GM10248 (cell line): ENCODE measurements at regions of chr9 and their contacts with region 1.

Region 1: DNA sequence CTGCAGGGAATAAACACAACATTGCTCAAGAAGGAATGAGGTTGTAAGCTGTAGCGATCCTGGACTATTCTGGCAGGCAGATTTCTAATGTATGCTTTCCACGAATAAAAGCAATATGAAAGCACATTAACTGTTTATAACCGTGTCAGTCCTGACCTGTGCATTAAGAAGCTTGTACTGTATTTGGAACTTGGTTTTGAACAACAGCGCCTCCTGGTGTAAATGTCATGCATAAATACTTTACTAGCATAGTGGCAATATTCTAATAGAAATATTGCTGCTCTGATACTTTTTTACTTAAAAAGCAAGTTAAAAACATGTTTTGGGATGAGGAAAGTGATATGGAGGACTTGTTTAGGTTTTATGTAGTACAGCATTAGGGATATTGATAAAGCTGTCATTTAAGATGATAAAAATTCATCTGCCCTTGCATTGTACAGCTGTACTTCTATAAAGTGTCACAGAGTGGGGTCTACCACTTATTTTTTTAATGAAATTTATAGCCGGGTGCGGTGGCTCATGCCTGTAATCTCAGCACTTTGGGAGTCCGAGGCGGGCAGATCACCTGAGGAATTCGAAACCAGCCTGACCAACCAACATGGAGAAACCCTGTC is 70.7 kb upstream of the GNE start:
- DNase-seq: peak; percentile 69
- CTCF ChIP-seq: peak; percentile 63

Region 2: DNA sequence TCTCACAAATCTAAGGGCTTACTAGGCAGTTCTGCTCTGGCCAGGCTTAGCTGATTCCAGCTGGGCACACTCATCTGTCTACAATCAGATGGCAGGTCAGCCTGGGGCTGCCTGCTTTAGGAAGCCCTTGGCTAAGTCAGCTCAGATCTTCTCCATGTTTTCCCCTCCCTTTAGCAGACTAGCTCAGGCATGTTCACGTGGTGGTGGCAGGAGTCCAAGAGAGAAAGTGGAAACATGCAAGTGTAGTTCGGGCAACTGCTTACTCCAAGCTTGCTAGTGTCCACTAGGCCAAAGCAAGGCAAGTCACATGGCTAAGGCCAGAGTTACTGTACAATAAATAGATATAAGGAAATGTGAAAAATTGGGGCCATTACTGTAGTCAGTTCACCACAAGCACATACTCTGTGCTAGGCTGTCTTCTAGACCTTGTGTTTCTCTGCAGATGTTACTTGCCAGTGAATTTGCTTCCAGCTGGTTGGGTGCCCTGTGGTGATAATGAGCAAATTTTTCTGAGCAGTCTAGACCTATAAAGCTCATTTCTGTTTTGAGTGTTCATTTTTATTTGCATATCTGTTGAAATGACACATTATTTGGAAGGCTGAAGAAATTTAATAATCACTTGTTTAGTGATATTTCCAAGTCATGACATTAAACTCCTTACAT is 253.9 kb before region 1 on chr9:
- CTCF ChIA-PET with region 1: no interaction called
- POLR2A ChIA-PET with region 1: no interaction called
- DNase-seq: no peak
- CTCF ChIP-seq: no peak

Region 3: DNA sequence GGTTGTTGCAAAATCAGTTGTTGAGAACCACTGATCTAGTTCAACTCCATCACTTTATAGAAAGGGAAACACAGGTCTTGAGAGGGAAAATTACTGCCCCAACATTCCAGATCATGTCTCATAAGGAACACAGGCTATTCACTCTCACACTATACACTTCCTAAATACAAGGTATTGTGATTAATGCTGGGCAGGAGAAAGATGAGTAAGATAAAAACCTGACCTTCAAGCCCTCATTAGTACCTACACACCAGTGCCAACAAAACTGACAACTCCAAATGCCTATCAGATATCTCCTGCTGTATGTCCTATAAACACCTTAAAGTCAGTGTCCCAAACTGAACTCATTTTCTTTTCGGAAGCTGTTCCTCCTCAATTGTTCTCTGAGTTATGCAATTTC is 78.8 kb before region 1 on chr9:
- CTCF ChIA-PET with region 1: interaction called, 57 read pairs
- POLR2A ChIA-PET with region 1: no interaction called
- DNase-seq: no peak
- CTCF ChIP-seq: no peak

Region 4: DNA sequence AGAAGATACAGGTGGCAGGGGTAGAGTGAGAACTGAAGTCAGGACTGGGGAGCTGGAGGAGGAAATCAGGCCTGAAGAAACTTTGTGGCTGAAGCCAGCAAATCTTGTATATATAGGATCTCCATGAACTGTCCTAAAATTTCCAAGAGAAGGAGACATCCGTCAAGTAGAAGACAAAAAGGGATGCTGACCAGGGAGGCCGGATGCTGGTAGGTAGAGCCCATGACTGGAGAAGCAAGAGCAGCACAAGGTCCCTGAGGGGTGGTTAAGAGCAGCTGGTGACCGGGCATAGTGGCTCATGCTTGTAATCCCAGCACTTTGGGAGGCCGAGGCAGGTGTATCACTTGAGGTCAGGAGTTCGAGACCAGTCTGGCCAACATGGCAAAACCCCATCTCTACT is 34.6 kb before region 1 on chr9:
- CTCF ChIA-PET with region 1: no interaction called
- POLR2A ChIA-PET with region 1: no interaction called
- DNase-seq: no peak
- CTCF ChIP-seq: no peak

Region 5: GRCh38 chr9:36317764-36318163 is 11.1 kb before region 1 on chr9:
- CTCF ChIA-PET with region 1: interaction called, 78 read pairs
- POLR2A ChIA-PET with region 1: no interaction called
- DNase-seq: no peak
- CTCF ChIP-seq: no peak